ENCODE measurements at regions of chr1 and their contacts with region 1.

Region 1: GRCh38 chr1:150922519-150922975 is 3.6 kb upstream of the SETDB1 start:
- DNase-seq: peak; percentile 83
- H3K4me3 Mint-ChIP-seq: no peak overlapping the region
- H3K27ac Mint-ChIP-seq: no peak overlapping the region
- H3K4me1 Mint-ChIP-seq: peaks cover 29% of the 10 kb centered on the region
- H3K27me3 Mint-ChIP-seq: no peaks in the 10 kb centered on the region

Region 2: DNA sequence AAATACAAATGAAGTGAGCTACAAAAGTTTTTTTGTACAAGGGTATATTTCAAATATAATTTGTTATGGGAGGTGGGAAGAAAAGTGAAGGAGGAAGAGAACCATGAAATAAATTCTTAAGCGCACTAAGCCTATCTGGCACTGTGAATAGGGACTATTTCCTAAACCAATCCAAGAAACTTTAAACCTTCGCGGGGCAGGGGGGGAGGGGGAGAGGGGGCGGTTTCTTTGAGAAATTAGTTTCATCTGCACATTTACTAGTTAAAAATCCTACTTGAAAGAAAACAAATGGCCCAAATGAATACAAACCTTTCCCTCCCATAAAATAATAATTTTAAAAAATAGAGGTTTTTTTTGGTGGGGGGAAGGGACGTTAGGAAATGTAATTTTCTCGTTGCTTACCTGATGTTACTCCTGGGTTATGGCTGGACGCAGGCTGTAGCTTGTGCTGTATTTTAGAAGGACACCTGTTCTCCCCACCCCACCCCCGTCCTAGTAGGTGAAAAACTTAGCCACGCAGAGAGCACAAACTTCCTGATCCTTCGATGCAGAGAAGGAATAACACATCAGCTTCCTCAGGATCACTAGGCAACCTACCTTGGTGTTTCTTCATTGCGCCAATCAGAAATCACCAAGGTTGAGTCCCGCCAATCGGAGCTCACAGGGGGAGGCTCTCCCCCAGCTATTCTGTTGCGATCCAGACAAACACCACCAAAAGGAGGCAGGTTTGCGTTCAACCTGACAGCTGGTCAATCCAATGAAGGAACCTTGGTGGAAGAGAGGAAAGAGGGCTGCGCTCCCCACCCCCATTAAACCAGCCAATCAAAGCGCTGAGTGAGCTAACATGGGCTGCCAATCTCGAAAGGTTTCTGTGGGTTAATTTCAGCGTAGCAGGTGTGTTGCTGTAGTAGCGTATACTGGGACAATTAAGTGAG is 225.7 kb before region 1 on chr1 and contains the start of gene GOLPH3L:
- CTCF ChIA-PET with region 1: interaction called, 13 read pairs
- POLR2A ChIA-PET with region 1: no interaction called
- DNase-seq: peak; percentile 93
- H3K4me3 Mint-ChIP-seq: peak within 1 kb of the TSS; percentile 100
- H3K27ac Mint-ChIP-seq: peak within 1 kb of the TSS; percentile 82
- H3K4me1 Mint-ChIP-seq: peaks cover 23% of the 10 kb centered on the region
- H3K27me3 Mint-ChIP-seq: peaks cover 8% of the 10 kb centered on the region
- total RNA-seq, gene GOLPH3L: 24.8 to 26.5 TPM

Region 3: DNA sequence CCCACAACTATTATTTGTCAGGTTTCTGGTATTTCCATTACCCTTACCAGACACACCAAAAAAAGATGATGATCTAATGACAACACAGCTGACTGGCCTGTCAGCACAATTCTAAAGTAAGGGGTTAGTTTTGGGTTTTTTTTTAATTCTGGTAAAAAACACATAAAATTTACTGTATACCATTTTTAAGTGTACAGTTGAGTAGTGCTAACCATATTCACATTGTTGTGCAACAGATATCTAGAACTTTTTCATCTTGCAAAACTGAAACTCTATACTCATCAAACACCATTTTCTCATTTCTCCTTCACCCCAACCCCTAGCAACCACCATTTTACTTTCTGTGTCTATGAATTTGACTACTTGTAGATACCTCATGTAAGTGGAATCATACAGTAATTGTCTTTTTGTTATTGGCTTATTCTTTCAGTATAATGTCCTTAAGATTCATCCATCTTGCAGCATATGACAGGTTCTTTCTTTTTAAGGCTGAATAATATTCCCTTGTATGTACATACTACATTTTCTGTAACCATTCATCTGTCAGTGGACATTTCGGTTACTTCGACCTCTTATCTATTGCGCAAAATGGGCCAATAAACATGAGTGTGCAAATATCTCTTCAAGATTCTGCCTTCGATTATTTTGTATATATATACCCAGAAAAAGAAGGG is 75.9 kb before region 1 on chr1:
- CTCF ChIA-PET with region 1: no interaction called
- POLR2A ChIA-PET with region 1: no interaction called
- DNase-seq: no peak
- H3K4me3 Mint-ChIP-seq: no peak overlapping the region
- H3K27ac Mint-ChIP-seq: no peak overlapping the region
- H3K4me1 Mint-ChIP-seq: peaks cover 19% of the 10 kb centered on the region
- H3K27me3 Mint-ChIP-seq: no peaks in the 10 kb centered on the region

Region 4: DNA sequence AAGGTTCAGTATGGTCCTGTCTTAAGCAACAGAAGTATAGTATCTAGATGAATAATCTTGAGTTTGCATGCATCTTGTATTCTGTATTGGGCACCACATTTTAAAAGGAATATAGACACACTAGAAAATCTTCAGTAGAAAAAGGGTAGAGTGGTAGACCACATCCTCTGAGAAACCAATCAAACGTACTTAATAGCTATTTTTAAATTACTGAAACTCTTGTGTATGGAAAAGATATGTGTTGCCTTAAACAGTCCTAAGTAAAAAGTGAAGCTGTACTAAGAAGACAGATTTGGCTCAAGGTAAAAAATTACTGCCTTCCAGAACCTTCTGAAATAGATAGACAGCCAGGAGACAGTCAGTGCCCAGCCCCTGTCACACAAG is 32.5 kb before region 1 on chr1:
- CTCF ChIA-PET with region 1: interaction called, 20 read pairs
- POLR2A ChIA-PET with region 1: interaction called, 6 read pairs
- DNase-seq: no peak
- H3K4me3 Mint-ChIP-seq: peak overlapping the region; percentile 22
- H3K27ac Mint-ChIP-seq: peak overlapping the region; percentile 81
- H3K4me1 Mint-ChIP-seq: peaks cover 35% of the 10 kb centered on the region
- H3K27me3 Mint-ChIP-seq: peaks cover 6% of the 10 kb centered on the region

Measured in activated CD4-positive, alpha-beta memory T cell treated with anti-CD3 and anti-CD28 coated beads, Interleukin-2, amount 10 ng/mL, durations not matched to agents 7 days and 5 days (primary cell).